ENCODE measurements at regions of chr7 and their contacts with region 1.

Region 1: DNA sequence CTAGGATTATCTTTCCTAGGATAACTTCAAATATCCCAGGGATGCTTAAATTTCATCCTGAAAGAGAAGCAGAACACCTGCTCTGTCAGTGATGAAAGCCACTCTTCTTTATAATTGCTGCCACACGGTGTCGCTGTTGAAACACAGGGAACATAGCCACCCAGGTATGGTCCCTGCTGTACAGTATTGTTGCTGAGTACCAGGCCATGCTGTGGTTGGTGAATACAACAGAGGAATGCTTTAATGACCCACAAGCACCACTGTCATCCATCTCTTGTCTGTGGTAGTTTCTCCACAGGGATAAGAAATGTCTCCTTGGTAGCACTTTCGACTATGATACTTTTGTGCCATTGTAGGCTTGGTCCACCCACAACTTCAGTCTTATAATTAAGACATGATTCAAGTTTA is 70.6 kb upstream of the STARD3NL start:
- DNase-seq: peak; percentile 86
- H3K4me3 Mint-ChIP-seq: no peak overlapping the region
- H3K27ac Mint-ChIP-seq: no peak overlapping the region
- H3K4me1 Mint-ChIP-seq: no peaks in the 10 kb centered on the region
- H3K27me3 Mint-ChIP-seq: no peaks in the 10 kb centered on the region
- CTCF ChIP-seq: peak; percentile 93

Region 2: GRCh38 chr7:37311355-37311754 is 796.1 kb before region 1 on chr7:
- CTCF ChIA-PET with region 1: no interaction called
- intact Hi-C with region 1: no loop called
- DNase-seq: no peak
- H3K4me3 Mint-ChIP-seq: no peak overlapping the region
- H3K27ac Mint-ChIP-seq: no peak overlapping the region
- H3K4me1 Mint-ChIP-seq: no peaks in the 10 kb centered on the region
- H3K27me3 Mint-ChIP-seq: peaks cover 22% of the 10 kb centered on the region
- CTCF ChIP-seq: no peak

Region 3: DNA sequence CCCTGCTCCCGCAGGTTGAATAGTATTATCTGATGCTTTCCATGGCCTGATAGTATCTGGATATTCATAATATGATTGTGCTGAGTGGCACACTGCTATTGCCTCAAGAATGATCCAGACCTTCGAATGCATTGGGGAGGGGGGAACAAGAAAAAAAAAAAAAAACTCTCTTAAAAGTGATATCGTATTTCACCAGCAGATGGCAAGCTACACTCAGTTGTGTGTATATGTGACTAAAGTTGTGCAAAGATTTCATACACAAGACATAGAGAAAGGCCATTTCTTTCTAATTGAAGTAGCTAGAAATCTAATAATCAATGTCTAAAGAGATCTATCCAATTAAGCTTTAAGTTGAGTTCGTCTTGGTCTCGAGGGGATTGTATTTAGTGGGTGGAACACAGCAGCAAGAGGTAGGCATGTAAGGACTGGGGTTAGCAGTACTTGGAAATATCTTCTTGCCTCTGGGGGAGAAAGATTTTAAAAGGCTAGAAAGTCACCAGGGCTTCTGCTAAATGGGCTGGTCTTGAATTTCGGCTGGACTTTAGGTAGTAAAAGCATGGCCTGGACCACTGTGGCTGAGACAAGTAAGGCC is 206.2 kb before region 1 on chr7:
- CTCF ChIA-PET with region 1: interaction called, 9 read pairs
- intact Hi-C with region 1: loop called (anchors 1 kb)
- DNase-seq: no peak
- H3K4me3 Mint-ChIP-seq: peak overlapping the region; percentile 31
- H3K27ac Mint-ChIP-seq: no peak overlapping the region
- H3K4me1 Mint-ChIP-seq: peaks cover 34% of the 10 kb centered on the region
- H3K27me3 Mint-ChIP-seq: no peaks in the 10 kb centered on the region
- CTCF ChIP-seq: peak; percentile 77

Region 4: DNA sequence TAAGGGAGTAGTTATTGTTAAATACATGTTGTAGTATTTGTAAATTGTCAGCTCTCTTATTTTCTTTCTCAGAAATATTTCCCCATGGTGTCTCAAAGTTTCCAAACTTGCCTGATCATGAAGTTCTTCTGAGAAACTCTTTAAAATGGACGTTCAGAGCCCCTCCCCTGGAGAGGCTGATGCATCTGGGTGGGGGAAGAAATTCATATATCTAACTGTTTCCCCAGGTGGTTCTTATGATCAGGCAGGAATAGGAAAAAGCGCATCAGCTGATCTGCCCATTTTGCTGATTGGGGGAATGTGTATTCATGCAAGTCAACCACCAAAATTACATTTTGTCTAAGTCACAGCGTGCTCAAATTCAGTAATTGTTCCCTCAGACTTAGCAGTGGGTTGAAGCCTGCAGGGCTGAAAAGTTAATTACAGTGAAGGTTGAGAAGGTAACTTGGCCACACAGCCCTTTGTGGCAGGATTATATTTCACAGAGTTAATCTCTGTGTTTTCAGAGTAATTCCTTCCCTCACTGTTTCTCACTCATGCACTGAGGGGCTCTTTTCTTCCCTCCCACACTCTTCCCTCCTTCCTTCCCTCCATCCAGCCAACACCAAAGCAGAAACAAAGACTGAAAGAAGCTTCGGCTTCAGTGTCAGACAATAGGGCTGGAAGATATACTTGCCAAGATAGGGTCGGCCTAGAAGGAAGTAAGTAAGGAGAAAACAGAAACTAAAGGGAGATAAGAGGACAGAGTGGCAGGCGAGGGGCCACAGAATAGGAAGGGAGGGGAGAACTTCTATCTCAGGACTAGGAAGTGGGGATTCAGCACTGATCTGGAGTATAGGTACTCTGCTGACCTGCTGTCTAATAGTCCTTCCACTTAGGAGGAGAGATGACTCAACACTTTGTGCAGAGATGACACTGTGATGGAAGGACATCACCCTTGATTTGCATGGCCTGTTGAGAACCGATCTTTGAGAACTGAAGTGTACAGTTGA is 20.0 kb after region 1 on chr7:
- CTCF ChIA-PET with region 1: no interaction called
- intact Hi-C with region 1: no loop called
- DNase-seq: no peak
- H3K4me3 Mint-ChIP-seq: no peak overlapping the region
- H3K27ac Mint-ChIP-seq: no peak overlapping the region
- H3K4me1 Mint-ChIP-seq: no peaks in the 10 kb centered on the region
- H3K27me3 Mint-ChIP-seq: no peaks in the 10 kb centered on the region
- CTCF ChIP-seq: no peak

Region 5: DNA sequence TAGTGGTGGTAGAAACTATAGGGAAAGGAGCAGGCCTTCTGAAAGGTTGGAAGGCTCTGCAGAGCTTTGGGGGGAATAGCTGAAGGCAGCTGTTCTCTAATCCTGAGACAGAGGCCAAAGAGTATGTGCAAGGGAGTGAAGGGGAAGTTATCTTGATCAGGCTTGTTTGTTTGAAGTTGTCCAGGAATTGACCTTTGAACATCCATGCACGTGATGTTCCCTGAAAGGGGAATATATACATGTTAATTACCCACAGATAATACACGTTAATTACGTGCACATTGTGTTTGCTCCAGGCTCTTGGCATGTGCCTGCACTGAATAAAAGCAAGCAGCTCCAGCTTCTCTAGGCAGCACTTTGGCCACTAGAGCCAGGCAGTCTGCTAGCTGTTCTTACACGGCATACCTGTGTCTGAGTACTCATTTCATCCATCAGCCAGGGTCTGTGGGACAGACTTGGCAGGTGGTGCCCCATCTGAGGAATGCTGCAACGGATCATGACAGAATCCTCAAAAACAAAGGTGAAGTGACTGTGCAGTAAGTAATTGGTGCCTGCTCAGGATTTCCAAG is 52.6 kb after region 1 on chr7:
- CTCF ChIA-PET with region 1: no interaction called
- intact Hi-C with region 1: no loop called
- DNase-seq: no peak
- H3K4me3 Mint-ChIP-seq: no peak overlapping the region
- H3K27ac Mint-ChIP-seq: no peak overlapping the region
- H3K4me1 Mint-ChIP-seq: no peaks in the 10 kb centered on the region
- H3K27me3 Mint-ChIP-seq: peaks cover 9% of the 10 kb centered on the region
- CTCF ChIP-seq: no peak

Region 6: DNA sequence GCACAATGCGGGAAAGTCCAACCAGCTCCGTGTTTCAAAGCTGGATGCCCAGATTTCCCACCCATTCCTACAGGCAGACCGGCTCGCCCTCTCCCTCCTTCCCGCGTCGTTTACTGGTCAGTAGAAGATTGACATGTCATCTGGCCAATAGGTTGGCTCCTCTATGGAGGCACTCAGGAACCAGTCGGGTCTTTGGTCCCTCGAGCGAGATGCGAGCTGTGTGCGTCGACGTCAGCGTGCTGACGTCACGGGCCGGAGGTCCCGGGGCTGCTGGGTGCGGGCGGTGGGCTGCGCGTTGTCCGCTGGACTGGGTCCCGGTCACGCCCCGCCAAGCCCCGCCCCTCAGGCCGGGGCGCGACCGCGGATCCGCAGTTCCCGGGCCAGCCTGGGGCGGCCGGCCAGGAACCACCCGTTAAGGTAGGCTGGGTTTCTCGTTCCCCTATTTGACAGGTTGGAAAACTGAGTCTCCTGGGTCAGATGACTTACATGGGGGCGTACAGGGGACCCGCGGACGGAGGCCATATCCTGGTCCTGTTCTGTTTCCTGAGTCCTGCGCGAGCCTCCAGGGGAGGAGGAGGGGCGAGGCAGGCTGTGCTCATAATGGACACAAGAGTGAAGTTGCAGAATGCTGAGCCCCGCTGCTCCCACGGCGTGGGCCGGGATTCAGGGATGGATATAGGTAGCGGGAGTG is 70.7 kb after region 1 on chr7 and contains the start of gene STARD3NL:
- CTCF ChIA-PET with region 1: no interaction called
- intact Hi-C with region 1: loop called (anchors 5 kb)
- DNase-seq: peak; percentile 99
- H3K4me3 Mint-ChIP-seq: peak within 1 kb of the TSS; percentile 95
- H3K27ac Mint-ChIP-seq: peak within 1 kb of the TSS; percentile 90
- H3K4me1 Mint-ChIP-seq: peaks cover 17% of the 10 kb centered on the region
- H3K27me3 Mint-ChIP-seq: no peaks in the 10 kb centered on the region
- CTCF ChIP-seq: no peak
- total RNA-seq, gene STARD3NL: 60.7 and 66.4 TPM in 2 replicates

Region 7: GRCh38 chr7:38215735-38216670 is 108.5 kb after region 1 on chr7:
- CTCF ChIA-PET with region 1: interaction called, 5 read pairs
- intact Hi-C with region 1: loop called (anchors 2 kb)
- DNase-seq: peak; percentile 74
- H3K4me3 Mint-ChIP-seq: no peak overlapping the region
- H3K27ac Mint-ChIP-seq: peak overlapping the region; percentile 37
- H3K4me1 Mint-ChIP-seq: peaks cover 17% of the 10 kb centered on the region
- H3K27me3 Mint-ChIP-seq: no peaks in the 10 kb centered on the region
- CTCF ChIP-seq: peak; percentile 93

Region 8: GRCh38 chr7:38222481-38223096 is 115.1 kb after region 1 on chr7:
- CTCF ChIA-PET with region 1: interaction called, 10 read pairs
- intact Hi-C with region 1: loop called (anchors 1 kb)
- DNase-seq: peak; percentile 67
- H3K4me3 Mint-ChIP-seq: no peak overlapping the region
- H3K27ac Mint-ChIP-seq: no peak overlapping the region
- H3K4me1 Mint-ChIP-seq: no peaks in the 10 kb centered on the region
- H3K27me3 Mint-ChIP-seq: no peaks in the 10 kb centered on the region
- CTCF ChIP-seq: peak; percentile 89

Region 9: DNA sequence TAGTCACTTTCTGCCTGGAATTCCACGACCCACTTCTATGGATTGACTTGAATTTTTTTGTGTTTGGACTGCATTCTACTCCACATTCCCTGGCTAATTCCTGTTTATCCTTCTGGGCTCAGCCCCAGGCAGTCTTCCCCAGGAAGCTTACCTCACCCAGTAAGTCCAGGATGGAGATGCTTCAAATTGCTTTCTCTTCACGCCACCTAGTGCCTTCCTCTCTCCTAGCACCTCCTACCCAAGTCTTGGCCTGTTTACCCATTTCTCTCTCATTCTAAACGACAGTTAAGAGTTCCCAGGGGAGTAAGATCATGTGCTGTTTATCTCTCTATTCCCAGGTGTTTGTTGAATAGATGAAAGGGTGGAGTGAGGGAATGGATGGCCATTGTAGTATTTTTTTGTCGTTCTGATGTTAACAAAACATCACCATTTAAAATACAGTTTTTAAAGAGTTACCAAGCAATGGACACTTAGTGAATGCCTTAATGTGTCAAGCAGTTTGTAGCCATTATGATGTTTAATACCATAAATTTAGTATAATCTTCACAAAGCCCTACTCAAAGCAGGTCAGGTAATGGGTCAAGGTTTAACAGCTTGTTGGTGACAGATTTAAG is 211.4 kb after region 1 on chr7:
- CTCF ChIA-PET with region 1: interaction called, 3 read pairs
- intact Hi-C with region 1: loop called (anchors 1 kb)
- DNase-seq: peak; percentile 53
- H3K4me3 Mint-ChIP-seq: no peak overlapping the region
- H3K27ac Mint-ChIP-seq: no peak overlapping the region
- H3K4me1 Mint-ChIP-seq: peaks cover 8% of the 10 kb centered on the region
- H3K27me3 Mint-ChIP-seq: peaks cover 52% of the 10 kb centered on the region
- CTCF ChIP-seq: peak; percentile 72

Region 10: DNA sequence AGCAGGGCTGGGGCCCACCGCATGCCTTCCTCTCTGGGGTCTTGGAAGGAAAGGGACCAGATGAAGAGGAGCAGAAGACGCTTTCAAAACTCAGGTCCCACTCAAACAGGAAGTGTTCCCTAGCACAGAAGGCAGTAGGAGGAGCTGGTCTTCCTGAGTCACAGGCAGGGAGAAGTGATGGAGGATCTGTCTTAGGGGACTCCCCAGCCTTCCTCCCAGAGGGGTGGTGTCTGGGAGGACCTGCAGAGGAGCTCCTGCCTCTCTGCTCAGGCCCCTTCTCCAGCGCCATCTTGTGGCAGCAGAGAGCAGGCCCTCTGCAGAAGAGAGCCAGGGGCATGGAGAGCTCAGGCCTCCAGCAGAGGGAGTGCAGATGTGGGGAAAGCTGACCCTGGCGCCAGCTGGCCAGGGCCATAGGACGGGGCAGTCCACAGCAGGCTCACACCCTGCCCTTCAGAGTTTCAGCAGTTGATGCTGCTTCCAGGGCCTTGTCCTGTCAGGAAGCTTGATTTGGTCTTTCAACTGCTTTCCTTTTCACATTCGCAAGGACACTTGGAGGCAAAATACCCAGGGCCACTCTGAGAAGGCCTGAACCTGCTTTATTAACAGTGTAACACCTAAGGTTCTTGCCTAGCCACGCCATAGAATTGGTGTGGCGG is 228.1 kb after region 1 on chr7:
- CTCF ChIA-PET with region 1: interaction called, 14 read pairs
- intact Hi-C with region 1: loop called (anchors 1 kb)
- DNase-seq: peak; percentile 93
- H3K4me3 Mint-ChIP-seq: no peak overlapping the region
- H3K27ac Mint-ChIP-seq: no peak overlapping the region
- H3K4me1 Mint-ChIP-seq: peaks cover 9% of the 10 kb centered on the region
- H3K27me3 Mint-ChIP-seq: no peaks in the 10 kb centered on the region
- CTCF ChIP-seq: peak; percentile 98

Measured in Calu3 (cell line).